Tibial artery (tissue), 4 donors: ENCODE measurements at regions of chr11 and their contacts with region 1.

Region 1: GRCh38 chr11:78416305-78417178 is 1.1 kb downstream of the GAB2 start:
- DNase-seq: peak; percentile 94 to 96
- H3K4me3 ChIP-seq: peak overlapping the region; percentile 98 to 99
- H3K27ac ChIP-seq: peak overlapping the region; percentile 100
- H3K4me1 ChIP-seq: peaks cover 0 to 52% (median 24%) of the 10 kb centered on the region in 4 donors
- H3K27me3 ChIP-seq: no peaks in the 10 kb centered on the region
- CTCF ChIP-seq: peak; percentile 45 to 65

Region 2: DNA sequence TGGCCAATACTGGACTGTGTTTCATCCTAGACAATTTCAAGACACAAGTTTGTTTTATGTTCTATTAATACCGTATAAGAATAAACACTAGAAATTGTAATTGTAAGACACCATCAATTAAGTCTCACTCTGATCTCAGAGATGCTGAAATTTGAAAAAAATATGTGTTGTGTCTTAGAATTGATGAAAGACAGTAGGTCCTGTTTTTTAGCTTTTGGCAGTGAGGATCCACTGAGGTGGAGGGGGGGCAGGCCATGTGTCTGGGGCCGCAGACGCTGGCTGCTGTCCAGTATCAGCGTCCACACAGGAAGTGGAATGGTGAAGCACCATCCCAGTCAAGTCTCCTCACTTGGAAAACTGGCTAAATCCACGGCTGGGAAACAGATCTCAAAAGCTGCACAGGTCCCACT is 254.6 kb before region 1 on chr11:
- intact Hi-C with region 1: loop called (anchors 5 kb)
- DNase-seq: peak in 1 of 2 donors; percentile 62
- H3K4me3 ChIP-seq: no peak overlapping the region
- H3K27ac ChIP-seq: peak overlapping the region; percentile 79 to 82
- H3K4me1 ChIP-seq: peaks cover 0 to 62% (median 32%) of the 10 kb centered on the region in 4 donors
- H3K27me3 ChIP-seq: no peaks in the 10 kb centered on the region
- CTCF ChIP-seq: no peak

Region 3: GRCh38 chr11:78228467-78228866 is 188.1 kb before region 1 on chr11:
- intact Hi-C with region 1: loop called (anchors 5 kb)
- DNase-seq: no peak
- H3K4me3 ChIP-seq: no peak overlapping the region
- H3K27ac ChIP-seq: peak overlapping the region in 1 of 2 donors; percentile 17
- H3K4me1 ChIP-seq: peaks cover 0 to 40% (median 16%) of the 10 kb centered on the region in 4 donors
- H3K27me3 ChIP-seq: no peaks in the 10 kb centered on the region
- CTCF ChIP-seq: peak; percentile 40 to 59

Region 4: GRCh38 chr11:78574386-78575381 is 158.1 kb after region 1 on chr11 and contains the start of gene NARS2:
- intact Hi-C with region 1: loop called (anchors 5 kb)
- DNase-seq: peak; percentile 97 to 99
- H3K4me3 ChIP-seq: peak within 1 kb of the TSS; percentile 73 to 83
- H3K27ac ChIP-seq: peak within 1 kb of the TSS; percentile 78 to 87
- H3K4me1 ChIP-seq: peaks cover 0 to 18% (median 10%) of the 10 kb centered on the region in 4 donors
- H3K27me3 ChIP-seq: no peaks in the 10 kb centered on the region
- CTCF ChIP-seq: no peak